OCI-LY7 (cell line): ENCODE measurements at regions of chr3 and their contacts with region 1.

Region 1: GRCh38 chr3:58332575-58333188 is at the start of gene PXK:
- DNase-seq: peak; percentile 88
- H3K4me3 ChIP-seq: peak within 1 kb of the TSS; percentile 80
- H3K27ac ChIP-seq: peak within 1 kb of the TSS; percentile 82
- H3K4me1 ChIP-seq: peaks cover 49% of the 10 kb centered on the region
- CTCF ChIP-seq: peak; percentile 49
- total RNA-seq, gene PXK: 51.3 and 68.7 TPM in 2 replicates

Region 2: DNA sequence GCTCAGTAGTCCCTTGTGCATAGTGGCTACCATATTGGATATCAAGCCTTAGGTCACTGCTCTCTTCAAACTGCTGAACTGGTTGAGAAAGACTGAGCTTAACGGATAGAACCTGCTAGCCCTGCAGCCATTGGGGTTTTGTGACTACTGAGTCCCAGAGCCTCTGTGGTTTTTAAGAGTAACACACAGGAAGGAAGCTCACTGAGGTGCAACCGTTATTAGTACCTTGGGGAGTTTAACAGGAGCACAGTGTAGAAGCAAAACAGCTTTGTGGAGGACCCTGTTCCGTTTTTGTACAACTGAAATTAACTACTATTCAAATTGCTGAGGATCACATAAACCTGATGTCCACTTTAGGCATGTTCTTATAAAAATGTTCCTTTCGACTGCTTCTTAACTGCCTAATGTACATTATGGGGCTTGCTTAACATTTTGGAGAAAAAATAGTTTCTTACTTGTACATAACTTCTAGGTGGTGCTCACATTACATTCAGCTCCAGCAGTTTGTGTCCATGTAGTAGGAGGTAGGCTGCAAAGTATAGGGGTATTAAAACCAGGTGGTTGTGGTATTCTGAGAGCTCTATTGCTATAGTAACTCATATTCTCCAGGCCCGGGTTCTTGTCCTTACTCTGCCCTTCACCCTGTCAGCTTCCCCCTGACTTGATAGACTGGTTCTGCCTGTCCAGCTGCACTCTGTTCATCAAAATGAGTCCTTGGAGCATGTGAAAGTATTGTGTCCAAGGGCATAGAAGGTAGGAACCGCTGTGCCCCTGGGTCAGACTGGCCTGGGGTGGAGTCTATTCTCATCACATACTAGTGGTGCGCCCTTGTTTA is 17.3 kb after region 1 on chr3:
- CTCF ChIA-PET with region 1: interaction called, 22 read pairs
- POLR2A ChIA-PET with region 1: interaction called, 711 read pairs
- intact Hi-C with region 1: loop called (anchors 1 kb)
- DNase-seq: peak; percentile 98
- H3K4me3 ChIP-seq: peak overlapping the region; percentile 62
- H3K27ac ChIP-seq: peak overlapping the region; percentile 99
- H3K4me1 ChIP-seq: peaks cover 98% of the 10 kb centered on the region
- CTCF ChIP-seq: no peak

Region 3: DNA sequence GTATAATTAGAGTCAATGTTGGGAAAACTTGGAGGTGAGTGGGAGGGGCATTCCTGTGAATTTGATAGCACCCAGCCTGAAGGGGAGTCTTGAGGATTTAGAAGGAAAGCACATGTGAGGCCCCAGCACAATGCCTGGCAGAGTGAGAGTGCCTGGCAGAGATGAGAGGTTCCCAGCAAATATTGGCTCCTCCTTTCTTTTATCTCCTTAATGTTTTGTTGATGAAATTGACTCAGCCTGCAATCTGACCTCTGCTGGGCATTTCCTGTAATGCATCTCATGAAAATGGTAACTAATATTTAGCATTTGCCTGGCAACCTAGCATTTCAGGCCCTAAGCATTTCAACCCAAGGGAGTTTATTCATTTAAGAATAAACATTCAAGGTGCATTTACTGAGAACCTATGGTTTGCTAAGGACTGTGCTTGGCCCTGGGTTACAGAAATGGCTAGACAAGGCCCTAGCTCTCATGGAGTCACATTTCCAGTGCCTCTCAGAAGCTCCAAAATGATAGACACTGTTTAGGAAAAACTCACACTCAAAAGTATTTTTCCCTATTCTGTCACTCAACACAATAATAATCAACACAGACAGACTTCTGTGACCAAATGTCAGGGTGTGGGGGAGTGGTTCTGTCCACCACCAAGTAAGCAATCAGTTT is 82.0 kb after region 1 on chr3:
- CTCF ChIA-PET with region 1: interaction called, 3 read pairs
- POLR2A ChIA-PET with region 1: interaction called, 3 read pairs
- intact Hi-C with region 1: loop called (anchors 1 kb)
- DNase-seq: peak; percentile 76
- H3K4me3 ChIP-seq: no peak overlapping the region
- H3K27ac ChIP-seq: no peak overlapping the region
- H3K4me1 ChIP-seq: peaks cover 11% of the 10 kb centered on the region
- CTCF ChIP-seq: peak; percentile 88

Region 4: GRCh38 chr3:58433400-58434169 is 100.9 kb after region 1 on chr3 and contains the start of gene PDHB:
- CTCF ChIA-PET with region 1: no interaction called
- POLR2A ChIA-PET with region 1: interaction called, 3 read pairs
- intact Hi-C with region 1: loop called (anchors 5 kb)
- DNase-seq: peak; percentile 93
- H3K4me3 ChIP-seq: peak within 1 kb of the TSS; percentile 83
- H3K27ac ChIP-seq: peak within 1 kb of the TSS; percentile 39
- H3K4me1 ChIP-seq: peaks cover 27% of the 10 kb centered on the region
- CTCF ChIP-seq: 0 out of 2 replicates have a peak, but pooled peaks have one; percentile 23
- total RNA-seq, gene PDHB: 60.8 and 76.8 TPM in 2 replicates

Region 5: DNA sequence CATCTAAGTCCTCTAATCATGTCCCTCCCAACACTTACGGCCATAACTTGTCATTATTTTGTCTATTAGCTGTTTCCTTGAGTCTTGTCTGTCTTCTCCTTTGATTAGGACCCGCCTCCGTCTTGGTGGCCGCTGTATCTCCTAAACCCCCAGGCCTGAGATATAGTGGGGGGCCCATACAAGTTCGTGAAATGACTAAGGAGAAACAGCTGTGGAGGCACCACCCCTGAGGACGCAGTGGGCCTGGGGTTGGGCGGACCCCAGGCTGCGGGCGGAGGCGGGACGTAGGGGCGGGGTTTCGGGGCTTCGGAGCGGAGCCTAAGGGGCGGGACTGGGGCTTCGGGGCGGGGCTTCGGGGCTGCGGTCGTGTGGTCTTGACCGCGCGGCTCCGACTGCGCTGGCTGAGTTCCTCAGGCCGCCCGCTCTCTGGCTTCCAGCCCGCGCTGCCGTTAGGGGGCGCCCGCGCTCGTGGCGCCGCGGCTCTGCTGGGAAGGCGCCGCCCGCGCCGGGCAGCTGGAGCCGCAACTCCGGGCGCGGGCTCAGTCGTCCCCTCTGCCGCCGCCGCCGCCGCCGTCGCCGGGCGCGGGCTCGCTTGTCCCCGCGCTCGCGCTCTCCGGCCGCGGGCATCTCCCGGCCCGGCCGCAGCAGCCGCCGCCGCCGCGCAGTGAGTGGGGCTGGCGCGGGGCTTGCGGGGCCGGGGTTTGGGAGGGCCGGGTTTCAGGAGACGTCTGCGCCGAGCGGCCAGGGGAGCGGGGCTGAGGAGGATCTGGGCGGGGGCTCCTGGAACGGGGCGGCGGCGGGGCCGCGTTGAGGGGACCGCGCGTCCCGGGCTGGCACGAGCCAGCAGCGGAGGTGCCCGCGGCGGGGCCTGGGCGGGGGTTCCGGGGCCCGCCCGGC is 159.1 kb after region 1 on chr3 and contains the start of gene KCTD6:
- CTCF ChIA-PET with region 1: interaction called, 4 read pairs
- POLR2A ChIA-PET with region 1: interaction called, 3 read pairs
- intact Hi-C with region 1: loop called (anchors 1 kb)
- DNase-seq: peak; percentile 96
- H3K4me3 ChIP-seq: peak within 1 kb of the TSS; percentile 77
- H3K27ac ChIP-seq: peak within 1 kb of the TSS; percentile 25
- H3K4me1 ChIP-seq: peaks cover 48% of the 10 kb centered on the region
- CTCF ChIP-seq: peak; percentile 68
- total RNA-seq, gene KCTD6: 12.6 and 17.1 TPM in 2 replicates